K562 (cell line): ENCODE measurements at regions of chr6 and their contacts with region 1.

Region 1: DNA sequence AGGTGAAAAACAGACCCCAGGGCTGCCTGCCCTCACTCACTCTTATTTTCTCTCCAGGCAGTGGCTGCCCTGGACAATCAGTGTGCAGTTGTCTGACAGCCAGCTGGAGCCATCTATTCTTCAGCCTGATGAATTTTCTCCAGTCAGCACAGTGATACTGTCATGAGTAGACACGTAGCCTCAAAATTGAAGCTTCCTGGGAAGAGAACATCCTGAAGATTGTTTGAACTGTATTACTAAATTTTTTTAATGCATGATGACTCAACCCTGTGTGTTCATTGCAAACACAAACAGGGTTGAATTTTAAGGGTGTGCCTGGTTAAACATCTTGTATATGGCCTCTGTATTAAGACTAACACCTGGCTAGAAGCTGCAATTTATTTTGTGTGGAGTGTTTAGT is 49.8 kb upstream of the STXBP5 start:
- DNase-seq: no peak
- ATAC-seq: no peak
- H3K4me3 ChIP-seq: no peak overlapping the region
- H3K27ac ChIP-seq: no peak overlapping the region
- H3K4me1 ChIP-seq: peaks cover under 1 to 32% of the 10 kb centered on the region in 2 experiments
- H3K27me3 ChIP-seq: no peaks in the 10 kb centered on the region
- CTCF ChIP-seq: no peak
- EP300 ChIP-seq: no peak
- POLR2A ChIP-seq: no peak
- RAD21 ChIP-seq: no peak

Region 2: DNA sequence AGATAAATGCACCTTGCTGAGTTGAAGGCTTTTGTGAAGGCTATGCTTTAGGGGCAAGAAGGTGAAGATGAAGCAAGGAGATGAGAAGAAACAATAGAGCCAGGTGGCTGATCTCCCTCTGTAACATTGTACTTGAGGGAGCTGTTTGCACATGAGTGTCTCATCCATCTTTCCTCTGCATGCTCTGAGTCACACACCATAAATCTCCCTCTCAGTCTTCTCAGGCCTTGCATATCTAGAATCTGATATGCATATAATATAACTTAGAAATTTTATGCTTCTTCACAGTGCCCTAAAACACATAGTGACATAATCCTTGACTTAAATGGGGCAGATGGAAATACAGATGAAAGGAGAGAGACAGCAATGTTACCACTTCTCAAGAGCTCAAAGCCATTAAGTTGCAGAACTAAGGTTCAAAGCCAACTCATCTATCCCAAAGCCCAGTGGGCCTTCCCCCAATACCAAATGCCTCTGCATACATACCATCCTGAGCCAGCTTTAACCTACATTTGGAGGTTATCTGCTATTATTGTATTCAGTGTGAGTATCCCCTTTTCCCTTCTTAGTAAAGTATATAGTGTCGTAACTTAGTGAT is 12.6 kb before region 1 on chr6:
- CTCF ChIA-PET with region 1: no interaction called
- POLR2A ChIA-PET with region 1: interaction called, 10 read pairs
- in situ Hi-C with region 1: no loop called
- intact Hi-C with region 1: no loop called
- DNase-seq: peak in 2 of 4 experiments; percentile 35 to 51
- ATAC-seq: peak; percentile 82
- H3K4me3 ChIP-seq: no peak overlapping the region
- H3K27ac ChIP-seq: no peak overlapping the region
- H3K4me1 ChIP-seq: peaks cover 0 to 10% of the 10 kb centered on the region in 2 experiments; a peak in 2 of 5 replicates
- H3K27me3 ChIP-seq: no peaks in the 10 kb centered on the region
- CTCF ChIP-seq: no peak
- EP300 ChIP-seq: peak; percentile 38; the same call in 1 of the 2 replicates
- POLR2A ChIP-seq: no peak
- RAD21 ChIP-seq: no peak

Region 3: DNA sequence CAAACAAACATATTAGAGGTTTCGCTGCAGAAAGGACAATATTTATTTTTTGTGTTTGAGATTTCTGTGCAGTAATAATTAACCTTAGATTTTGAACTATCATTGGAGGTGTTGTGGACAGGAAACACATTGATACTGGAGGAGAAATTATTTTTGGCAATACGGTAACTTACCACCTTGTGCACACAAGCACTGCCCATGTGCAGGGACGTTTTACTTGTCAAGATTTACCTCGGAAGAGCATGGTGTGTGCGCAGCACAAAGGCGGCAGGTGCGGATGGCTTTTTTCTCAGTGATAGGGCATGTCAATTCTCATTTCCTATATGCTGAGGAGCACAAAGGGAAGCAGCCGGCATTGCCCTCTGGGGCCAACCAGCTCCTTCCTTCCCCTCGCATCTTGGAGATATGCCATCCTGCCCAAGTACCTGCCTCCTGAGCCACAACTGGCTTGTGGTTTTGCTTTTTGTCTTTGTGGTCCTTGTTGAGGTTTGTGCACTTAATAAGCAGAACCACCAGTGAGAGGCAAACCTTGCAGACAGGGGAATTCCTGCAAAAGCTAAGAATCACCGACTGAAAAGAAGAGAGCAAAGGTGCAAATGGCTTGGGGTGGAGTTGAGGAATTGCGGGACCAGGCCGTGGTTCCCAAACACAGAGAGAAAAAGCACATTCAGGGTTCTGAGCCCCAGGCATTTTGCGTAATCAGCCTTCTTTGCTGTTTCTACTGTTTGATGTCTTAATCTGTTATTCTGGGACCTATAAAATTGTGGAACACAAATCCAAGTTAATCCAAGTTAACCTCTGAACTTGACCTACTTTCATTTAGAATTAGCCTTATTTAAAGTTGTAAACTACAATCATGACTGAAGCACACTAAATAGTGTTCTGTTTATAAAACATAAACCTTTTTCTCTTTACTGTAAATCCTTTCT is 375.9 kb after region 1 on chr6:
- CTCF ChIA-PET with region 1: no interaction called
- POLR2A ChIA-PET with region 1: no interaction called
- in situ Hi-C with region 1: no loop called
- intact Hi-C with region 1: no loop called
- DNase-seq: no peak
- ATAC-seq: no peak
- H3K4me3 ChIP-seq: no peak overlapping the region
- H3K27ac ChIP-seq: no peak overlapping the region
- H3K4me1 ChIP-seq: 0 out of 5 replicates have a peak, but pooled peaks cover 0 to 4% of the 10 kb centered on the region in 2 experiments
- H3K27me3 ChIP-seq: peaks cover 3 to 5% of the 10 kb centered on the region in 2 experiments; a peak in 3 of 5 replicates
- CTCF ChIP-seq: no peak
- EP300 ChIP-seq: no peak
- POLR2A ChIP-seq: no peak
- RAD21 ChIP-seq: no peak